IMR-90 (cell line): ENCODE measurements at regions of chr1 and their contacts with region 1.

Region 1: GRCh38 chr1:205977402-205978014 is 25.7 kb downstream of the RAB7B start:
- DNase-seq: peak; percentile 81
- ATAC-seq: peak; percentile 90
- H3K4me3 ChIP-seq: no peak overlapping the region
- H3K27ac ChIP-seq: no peak overlapping the region
- H3K4me1 ChIP-seq: no peaks in the 10 kb centered on the region
- H3K27me3 ChIP-seq: no peaks in the 10 kb centered on the region
- CTCF ChIP-seq: peak; percentile 97
- POLR2A ChIP-seq: peak; percentile 56
- RAD21 ChIP-seq: peak; percentile 99

Region 2: GRCh38 chr1:205493241-205494085 is 484.0 kb before region 1 on chr1:
- CTCF ChIA-PET with region 1: no interaction called
- POLR2A ChIA-PET with region 1: no interaction called
- dilution Hi-C with region 1: no loop called
- in situ Hi-C with region 1: no loop called
- intact Hi-C with region 1: no loop called
- DNase-seq: peak; percentile 56
- ATAC-seq: peak; percentile 91
- H3K4me3 ChIP-seq: no peak overlapping the region
- H3K27ac ChIP-seq: no peak overlapping the region
- H3K4me1 ChIP-seq: peaks cover 3% of the 10 kb centered on the region; the same call in 1 of the 2 replicates
- H3K27me3 ChIP-seq: peaks cover 57% of the 10 kb centered on the region
- CTCF ChIP-seq: no peak
- POLR2A ChIP-seq: no peak
- RAD21 ChIP-seq: no peak

Region 3: DNA sequence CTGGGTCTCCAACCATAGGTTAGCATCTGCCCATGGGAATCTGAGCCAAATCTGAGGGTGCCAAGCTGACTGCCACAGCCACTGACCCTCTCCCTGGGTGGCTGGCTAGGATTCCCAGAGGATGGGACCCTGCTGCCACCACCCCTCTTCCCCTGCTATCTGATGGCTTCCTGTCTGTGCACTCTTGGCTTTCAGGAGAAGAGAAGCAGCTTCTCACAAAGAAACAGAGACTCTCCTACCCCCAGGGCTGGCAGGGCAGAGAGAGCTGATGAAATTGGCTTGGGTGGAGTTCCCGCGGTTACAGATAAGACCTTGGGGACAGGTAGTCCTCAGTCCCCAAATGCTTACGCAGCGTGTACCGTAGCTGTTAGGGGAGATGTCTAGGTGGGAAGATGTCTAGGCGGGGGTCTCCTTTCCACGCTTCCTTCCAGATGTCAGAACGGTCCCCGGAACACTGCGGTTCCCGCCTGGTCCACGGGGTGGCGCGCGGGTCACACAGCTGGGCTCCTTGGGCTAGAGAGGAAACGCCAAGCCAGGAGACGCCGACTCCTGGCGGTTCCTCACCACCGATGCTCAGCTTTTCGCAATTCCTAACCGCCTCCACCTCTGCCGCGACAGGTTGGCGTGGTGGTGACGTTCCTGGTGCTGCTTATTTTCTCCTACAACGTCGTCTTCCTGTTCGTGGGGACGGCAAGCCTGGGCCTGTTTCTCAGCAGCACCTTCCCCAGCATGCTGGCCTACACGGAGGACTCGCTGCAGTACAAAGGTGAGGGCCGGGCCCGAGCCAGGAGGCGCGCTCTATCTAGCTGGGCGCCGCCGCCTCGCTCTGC is 385.8 kb before region 1 on chr1:
- CTCF ChIA-PET with region 1: interaction called, 4 read pairs
- POLR2A ChIA-PET with region 1: no interaction called
- dilution Hi-C with region 1: no loop called
- in situ Hi-C with region 1: no loop called
- intact Hi-C with region 1: loop called (anchors 10 kb)
- DNase-seq: peak; percentile 74
- ATAC-seq: peak; percentile 97
- H3K4me3 ChIP-seq: peak overlapping the region; percentile 46
- H3K27ac ChIP-seq: peak overlapping the region; percentile 11; the same call in 1 of the 2 replicates
- H3K4me1 ChIP-seq: peaks cover 4% of the 10 kb centered on the region
- H3K27me3 ChIP-seq: no peaks in the 10 kb centered on the region
- CTCF ChIP-seq: peak; percentile 99
- POLR2A ChIP-seq: peak; percentile 55; the same call in 1 of the 2 replicates
- RAD21 ChIP-seq: peak; percentile 100

Region 4: DNA sequence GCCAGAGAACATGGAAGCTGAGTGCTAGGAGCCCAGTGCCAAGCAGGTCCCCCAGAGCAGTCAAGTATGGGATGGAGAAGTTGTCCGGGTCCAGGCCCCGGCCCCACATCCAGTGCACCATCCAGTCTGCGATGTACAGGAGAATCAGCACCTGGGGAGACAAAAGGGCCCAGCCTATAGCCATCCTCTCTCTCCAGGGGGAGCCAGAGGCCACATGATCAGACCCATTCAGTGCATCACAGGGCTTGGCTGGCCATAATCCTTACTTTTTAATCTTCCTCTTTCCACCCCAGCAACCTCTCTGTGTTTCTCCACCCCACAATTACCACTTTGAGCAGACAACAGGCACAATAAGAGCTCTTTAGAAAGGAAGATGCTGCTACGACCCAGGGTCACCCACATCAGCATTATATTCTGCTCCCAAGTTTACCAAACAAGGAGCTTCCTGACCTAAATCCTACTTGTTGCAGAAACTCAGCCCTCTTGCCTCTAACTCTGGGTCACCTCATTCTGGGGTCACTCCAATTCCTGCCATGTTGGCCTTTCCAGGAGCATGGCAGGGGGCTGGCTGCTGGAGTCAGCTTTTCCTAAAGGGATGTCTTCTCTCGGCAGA is 185.8 kb before region 1 on chr1:
- CTCF ChIA-PET with region 1: interaction called, 50 read pairs
- POLR2A ChIA-PET with region 1: no interaction called
- dilution Hi-C with region 1: no loop called
- in situ Hi-C with region 1: loop called (anchors 5 kb)
- intact Hi-C with region 1: loop called (anchors 1 kb)
- DNase-seq: peak; percentile 44
- ATAC-seq: peak; percentile 98
- H3K4me3 ChIP-seq: no peak overlapping the region
- H3K27ac ChIP-seq: no peak overlapping the region
- H3K4me1 ChIP-seq: no peaks in the 10 kb centered on the region
- H3K27me3 ChIP-seq: no peaks in the 10 kb centered on the region
- CTCF ChIP-seq: peak; percentile 90
- POLR2A ChIP-seq: 0 out of 2 replicates have a peak, but pooled peaks have one; percentile 24
- RAD21 ChIP-seq: peak; percentile 93

Region 5: DNA sequence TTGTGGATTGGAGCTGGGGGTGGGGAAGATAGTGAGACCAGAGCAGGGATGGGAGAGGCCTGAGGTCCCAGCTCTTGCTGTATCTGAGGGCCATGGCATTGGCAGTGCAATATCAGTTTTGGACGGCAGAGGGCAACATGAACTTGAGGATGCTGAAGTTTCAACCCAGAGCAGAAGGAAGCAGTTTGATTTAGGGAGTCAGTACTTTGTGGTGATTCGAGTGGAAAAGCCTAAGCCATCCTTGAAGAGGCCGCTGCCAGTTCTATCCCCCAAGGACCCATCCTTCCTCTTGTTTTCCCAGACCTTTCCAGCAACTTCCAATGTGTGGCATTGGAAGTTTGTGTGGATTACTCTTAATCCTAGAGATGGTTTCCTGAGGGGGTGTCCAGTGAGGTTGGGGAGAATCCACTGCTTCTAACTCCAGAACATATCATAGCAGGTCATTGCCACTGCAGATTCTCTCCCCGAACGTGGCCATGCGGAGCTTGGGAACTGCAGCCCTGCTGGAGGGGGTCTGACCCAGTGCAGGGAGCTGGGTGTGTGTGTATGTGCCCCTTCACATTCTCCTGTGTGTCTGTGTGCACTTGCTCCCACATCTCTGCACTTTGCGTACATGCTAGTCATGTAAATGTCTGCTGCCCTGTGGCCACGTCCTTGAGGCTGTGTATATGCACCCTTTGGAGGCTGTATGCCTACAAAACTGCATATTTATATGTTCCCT is 58.3 kb before region 1 on chr1:
- CTCF ChIA-PET with region 1: interaction called, 161 read pairs
- POLR2A ChIA-PET with region 1: no interaction called
- dilution Hi-C with region 1: no loop called
- in situ Hi-C with region 1: no loop called
- intact Hi-C with region 1: loop called (anchors 1 kb)
- DNase-seq: peak; percentile 84
- ATAC-seq: peak; percentile 97
- H3K4me3 ChIP-seq: no peak overlapping the region
- H3K27ac ChIP-seq: no peak overlapping the region
- H3K4me1 ChIP-seq: no peaks in the 10 kb centered on the region
- H3K27me3 ChIP-seq: no peaks in the 10 kb centered on the region; the same call in 1 of the 2 replicates
- CTCF ChIP-seq: peak; percentile 96
- POLR2A ChIP-seq: peak; percentile 43; the same call in 1 of the 2 replicates
- RAD21 ChIP-seq: peak; percentile 97

Region 6: GRCh38 chr1:206890690-206891089 is 913.2 kb after region 1 on chr1:
- CTCF ChIA-PET with region 1: no interaction called
- POLR2A ChIA-PET with region 1: no interaction called
- dilution Hi-C with region 1: no loop called
- in situ Hi-C with region 1: no loop called
- intact Hi-C with region 1: no loop called
- DNase-seq: peak; percentile 84
- ATAC-seq: peak; percentile 30
- H3K4me3 ChIP-seq: no peak overlapping the region
- H3K27ac ChIP-seq: peak overlapping the region; percentile 84
- H3K4me1 ChIP-seq: peaks cover 30% of the 10 kb centered on the region
- H3K27me3 ChIP-seq: no peaks in the 10 kb centered on the region
- CTCF ChIP-seq: no peak
- POLR2A ChIP-seq: no peak
- RAD21 ChIP-seq: no peak